Sciatic nerve (tissue), 2 donors: ENCODE measurements at regions of chr14 and their contacts with region 1.

Region 1: DNA sequence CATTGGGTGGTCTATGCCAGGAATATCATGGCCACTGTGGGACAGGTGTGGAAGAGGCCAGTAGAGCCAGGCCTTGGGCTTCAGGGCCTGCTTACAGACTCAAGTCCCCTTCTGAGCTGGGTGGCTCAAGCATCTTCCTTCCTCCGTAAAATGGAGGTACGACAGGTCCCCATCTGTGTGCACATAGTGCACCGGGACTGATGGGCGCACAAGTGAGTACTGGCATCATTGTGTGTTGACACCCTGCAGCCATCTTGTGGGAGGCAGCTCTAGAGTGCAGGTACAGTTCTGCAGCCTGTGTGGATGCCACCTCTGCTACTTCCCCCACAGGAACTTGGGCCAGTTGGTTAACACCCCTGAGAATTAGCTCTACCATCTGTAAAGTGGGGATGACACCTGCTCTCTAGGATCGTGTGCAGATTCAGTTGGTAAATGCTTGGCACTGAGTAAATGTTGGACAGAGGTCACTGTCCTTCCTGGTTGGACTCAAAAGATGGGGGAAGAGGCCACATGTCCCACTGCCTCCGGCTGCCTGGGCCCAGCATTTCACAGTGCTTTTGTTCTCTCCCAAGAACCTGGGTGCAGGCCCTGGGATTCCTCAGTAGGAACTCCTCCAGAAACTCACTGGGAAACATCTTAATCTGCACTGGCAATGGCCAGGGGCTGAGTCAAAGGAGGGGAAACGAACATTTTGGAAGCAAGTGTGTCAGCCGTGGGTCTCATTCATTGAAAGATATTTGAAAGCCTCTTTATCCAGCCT is 70.6 kb downstream of the C14orf132 start:
- DNase-seq: no peak
- ATAC-seq: no peak

Region 2: DNA sequence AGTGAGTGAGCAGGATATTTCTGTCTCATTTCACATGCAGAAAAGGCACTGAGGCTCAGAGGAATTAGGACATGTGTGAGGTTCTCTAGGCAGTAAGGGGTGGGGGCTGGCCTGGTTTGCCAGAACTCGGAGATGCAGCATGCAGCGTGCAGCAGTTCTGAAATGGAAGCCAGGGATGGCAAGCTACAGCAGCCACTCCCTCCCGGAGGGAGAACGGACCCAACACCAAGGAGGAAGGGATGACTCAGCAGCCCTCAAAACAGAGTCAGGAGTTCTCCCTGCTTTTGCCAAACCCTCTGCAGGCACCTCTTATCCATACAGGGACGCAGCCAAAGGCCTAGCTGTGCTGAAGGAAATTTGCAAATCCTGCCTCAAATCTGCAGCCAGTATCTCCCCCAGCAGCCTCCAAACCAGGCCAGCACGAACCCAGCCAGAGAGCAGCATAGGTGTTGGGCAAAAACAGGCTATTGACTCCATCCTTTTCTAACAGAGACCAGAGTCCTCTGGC is 1507.8 kb before region 1 on chr14:
- intact Hi-C with region 1: loop called (anchors 5 kb)
- DNase-seq: peak; percentile 77
- ATAC-seq: peak; percentile 83

Region 3: DNA sequence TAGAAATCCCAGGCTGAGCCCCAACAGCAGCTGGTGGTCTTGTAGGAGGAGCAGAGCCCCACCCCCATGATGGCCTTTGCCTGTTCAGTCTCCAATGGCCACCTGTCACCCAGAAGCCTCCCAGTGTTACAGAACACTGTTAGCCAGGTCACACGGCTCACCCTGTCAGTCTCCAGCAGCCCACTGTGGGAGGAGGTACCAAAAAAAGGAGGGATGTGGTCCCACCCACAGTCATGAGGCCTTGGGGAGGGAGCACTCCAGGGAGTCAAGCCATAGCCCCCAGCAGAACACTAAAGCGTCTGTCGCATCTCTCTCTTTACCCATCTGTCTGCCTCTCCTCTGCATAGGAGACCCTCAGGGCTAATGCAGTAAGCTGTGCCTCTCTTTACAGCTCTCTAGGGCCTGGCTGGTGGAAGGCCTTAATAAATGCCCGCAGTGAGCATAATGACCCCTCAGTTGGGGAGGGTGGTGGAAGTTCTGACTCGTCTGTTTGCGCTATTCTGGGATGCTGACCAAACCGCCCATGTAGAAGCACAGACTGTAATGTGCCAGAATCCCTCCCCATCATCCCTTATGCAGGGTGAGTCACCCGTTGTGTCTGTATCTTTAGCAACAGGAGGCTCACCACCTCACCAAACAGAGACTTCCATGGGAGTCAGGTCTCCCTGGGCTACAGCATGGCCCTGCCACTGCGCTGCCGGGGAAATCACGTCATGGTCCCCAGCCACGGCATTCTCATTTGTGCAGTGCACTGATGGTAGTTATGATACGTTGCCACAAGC is 56.0 kb before region 1 on chr14:
- intact Hi-C with region 1: no loop called
- DNase-seq: no peak
- ATAC-seq: peak; percentile 90